Activated CD8-positive, alpha-beta memory T cell treated with anti-CD3 and anti-CD28 coated beads, Interleukin-2, amount 10 ng/mL, durations not matched to agents 7 days and 5 days (primary cell): ENCODE measurements at regions of chr2 and their contacts with region 1.

Region 1: DNA sequence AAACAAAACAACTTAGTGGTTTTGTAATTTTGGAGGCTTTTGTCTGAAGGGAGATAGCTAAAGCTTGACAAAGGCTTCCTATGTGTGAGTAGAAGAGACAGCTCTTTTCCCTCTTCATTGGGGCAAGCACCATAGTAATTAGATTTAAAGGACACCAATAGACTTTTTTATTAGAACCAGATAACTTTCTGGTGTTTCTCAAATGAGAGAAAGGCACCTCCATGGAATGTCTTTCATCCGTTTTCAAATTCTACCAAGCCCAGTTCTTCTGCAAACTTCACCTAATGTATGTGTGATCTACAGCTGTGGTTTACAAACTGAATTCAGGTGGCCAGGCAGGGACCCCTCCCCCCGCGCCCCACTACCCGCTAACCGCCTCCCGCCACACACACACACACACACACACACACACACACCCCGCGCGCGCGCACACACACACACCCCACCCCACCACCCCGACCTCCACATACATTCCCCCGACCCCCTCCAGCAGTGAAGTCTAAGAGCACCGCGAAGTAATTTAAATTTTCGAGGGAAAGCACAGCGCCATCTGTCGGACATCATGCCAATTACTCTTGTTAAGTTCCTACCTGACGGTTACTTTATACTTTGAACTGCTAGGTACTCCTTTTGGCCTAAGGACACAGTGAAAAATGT is 31.6 kb upstream of the PPP1R1C start:
- DNase-seq: peak; percentile 77
- ATAC-seq: peak; percentile 81
- H3K4me3 Mint-ChIP-seq: peak overlapping the region; percentile 29
- H3K27ac Mint-ChIP-seq: no peak overlapping the region
- H3K4me1 Mint-ChIP-seq: peaks cover 23% of the 10 kb centered on the region
- H3K27me3 Mint-ChIP-seq: peaks cover 31% of the 10 kb centered on the region

Region 2: DNA sequence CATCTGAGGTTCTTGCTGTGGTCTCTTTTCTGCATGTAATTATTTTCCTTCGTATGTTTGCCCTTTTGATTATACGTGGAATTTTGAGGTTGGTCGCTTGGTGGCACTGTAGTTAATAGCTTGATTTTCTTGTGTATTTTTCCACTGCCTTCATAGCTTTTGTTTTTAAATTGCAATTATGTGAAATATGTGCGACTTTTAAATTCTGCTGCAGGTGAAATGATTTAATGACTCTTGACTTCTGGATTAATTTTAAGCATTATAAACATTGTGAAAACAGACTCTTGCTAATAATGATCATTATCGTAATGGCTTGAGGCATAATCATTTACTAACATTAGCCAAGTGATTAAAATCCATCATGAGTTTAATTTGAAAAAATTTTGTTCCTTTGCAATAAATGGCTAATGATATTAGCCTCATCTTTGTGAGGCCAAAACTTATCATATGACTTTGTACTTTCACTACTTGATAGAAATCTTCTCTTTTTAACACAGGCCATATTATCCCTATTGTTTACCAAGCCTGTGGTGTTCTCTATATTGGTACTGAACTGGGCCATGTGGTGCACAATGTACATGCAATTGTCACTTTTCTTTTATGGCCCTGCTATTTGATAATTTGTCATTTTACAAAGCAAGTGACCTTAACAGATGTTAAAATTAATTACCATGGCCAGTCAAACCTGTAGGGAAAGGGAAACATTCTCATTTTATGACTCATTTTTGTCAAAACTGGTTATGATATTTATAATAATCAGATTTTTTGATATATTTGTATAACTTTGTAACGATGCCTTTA is 210.9 kb before region 1 on chr2:
- CTCF ChIA-PET with region 1: interaction called, 10 read pairs
- DNase-seq: peak; percentile 59
- ATAC-seq: no peak
- H3K4me3 Mint-ChIP-seq: no peak overlapping the region
- H3K27ac Mint-ChIP-seq: no peak overlapping the region
- H3K4me1 Mint-ChIP-seq: peaks cover 4% of the 10 kb centered on the region
- H3K27me3 Mint-ChIP-seq: peaks cover 15% of the 10 kb centered on the region

Region 3: DNA sequence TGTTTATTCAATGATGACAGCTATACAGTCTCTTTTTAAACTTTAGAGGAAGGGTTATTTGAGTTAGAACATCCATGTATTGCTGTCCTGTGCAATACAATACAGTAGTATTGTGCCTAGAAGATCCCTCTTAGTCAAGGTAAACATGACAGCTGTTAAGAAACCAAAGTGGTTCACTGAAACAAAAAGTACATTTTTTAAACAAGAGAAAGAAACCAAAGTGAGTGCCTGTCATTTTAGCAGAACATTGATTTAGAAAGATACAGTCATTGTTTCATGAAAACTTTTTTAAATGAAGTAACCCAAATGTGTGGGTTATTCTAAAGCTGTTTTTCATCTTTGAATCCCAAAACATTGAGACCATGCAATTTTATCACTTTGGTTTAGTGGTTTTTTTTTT is 47.0 kb before region 1 on chr2:
- CTCF ChIA-PET with region 1: no interaction called
- DNase-seq: no peak
- ATAC-seq: no peak
- H3K4me3 Mint-ChIP-seq: no peak overlapping the region
- H3K27ac Mint-ChIP-seq: no peak overlapping the region
- H3K4me1 Mint-ChIP-seq: peaks cover 12% of the 10 kb centered on the region
- H3K27me3 Mint-ChIP-seq: no peaks in the 10 kb centered on the region